H1 (cell line): ENCODE measurements at regions of chr11 and their contacts with region 1.

Region 1: DNA sequence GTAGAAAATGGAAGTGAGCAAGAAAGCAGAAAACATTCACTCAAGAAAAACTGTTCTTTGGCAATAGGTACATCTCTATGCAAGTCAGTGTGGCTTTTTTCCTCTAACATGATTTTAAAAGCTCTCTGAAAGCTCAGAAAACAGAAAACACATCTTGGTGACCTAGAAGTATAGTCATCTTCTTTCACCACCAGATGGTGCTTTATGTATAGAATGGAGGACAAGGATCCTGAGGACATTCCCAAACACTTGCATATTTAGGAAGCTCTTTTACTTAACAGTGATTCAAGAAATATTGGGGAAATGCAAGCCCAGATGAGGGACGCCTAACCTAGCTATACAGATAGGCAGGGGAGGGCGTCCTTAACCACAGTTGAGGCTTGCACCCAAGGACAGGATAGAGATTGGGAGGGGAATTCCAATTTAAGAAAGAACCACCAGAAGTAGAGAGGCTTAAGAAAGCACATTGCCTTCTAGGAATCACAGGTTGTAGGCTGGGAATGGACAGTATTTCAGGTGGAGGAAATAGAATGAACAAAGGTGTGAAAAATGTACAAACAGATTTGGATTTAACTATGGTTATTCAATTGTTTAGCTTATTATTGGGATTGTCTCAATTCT is 13.8 kb upstream of the CCDC81 start:
- DNase-seq: no peak
- H3K4me3 ChIP-seq: no peak overlapping the region
- H3K27ac ChIP-seq: no peak overlapping the region
- H3K4me1 ChIP-seq: peaks cover 0 to 3% (median 1%) of the 10 kb centered on the region in 4 experiments; a peak in 3 of 7 replicates
- H3K27me3 ChIP-seq: no peaks in the 10 kb centered on the region
- CTCF ChIP-seq: peak in 2 of 3 experiments; percentile 26 to 44; a peak in 2 of 4 replicates
- EP300 ChIP-seq: no peak
- POLR2A ChIP-seq: no peak
- RAD21 ChIP-seq: peak; percentile 60 to 65

Region 2: GRCh38 chr11:86255896-86256295 is 105.0 kb before region 1 on chr11:
- CTCF ChIA-PET with region 1: no interaction called
- POLR2A ChIA-PET with region 1: no interaction called
- DNase-seq: no peak
- H3K4me3 ChIP-seq: no peak overlapping the region
- H3K27ac ChIP-seq: no peak overlapping the region
- H3K4me1 ChIP-seq: no peaks in the 10 kb centered on the region
- H3K27me3 ChIP-seq: no peaks in the 10 kb centered on the region
- CTCF ChIP-seq: no peak
- EP300 ChIP-seq: no peak
- POLR2A ChIP-seq: no peak
- RAD21 ChIP-seq: no peak

Region 3: GRCh38 chr11:86314646-86315045 is 46.2 kb before region 1 on chr11:
- CTCF ChIA-PET with region 1: no interaction called
- POLR2A ChIA-PET with region 1: no interaction called
- DNase-seq: no peak
- H3K4me3 ChIP-seq: no peak overlapping the region
- H3K27ac ChIP-seq: no peak overlapping the region
- H3K4me1 ChIP-seq: no peaks in the 10 kb centered on the region
- H3K27me3 ChIP-seq: no peaks in the 10 kb centered on the region
- CTCF ChIP-seq: no peak
- EP300 ChIP-seq: no peak
- POLR2A ChIP-seq: no peak
- RAD21 ChIP-seq: no peak

Region 4: GRCh38 chr11:86374586-86374985 is 13.7 kb after region 1 on chr11 and contains the start of gene CCDC81:
- CTCF ChIA-PET with region 1: interaction called, 19 read pairs
- POLR2A ChIA-PET with region 1: no interaction called
- DNase-seq: peak; percentile 49 to 82
- H3K4me3 ChIP-seq: peak within 1 kb of the TSS; percentile 31 to 55 (median 38); a peak in 6 of 8 replicates
- H3K27ac ChIP-seq: no peak within 1 kb of the TSS
- H3K4me1 ChIP-seq: peaks cover 0 to 2% (median 0%) of the 10 kb centered on the region in 4 experiments; a peak in 1 of 7 replicates
- H3K27me3 ChIP-seq: peaks cover 0 to 3% (median 0%) of the 10 kb centered on the region in 4 experiments; a peak in 2 of 7 replicates
- CTCF ChIP-seq: no peak
- EP300 ChIP-seq: no peak
- POLR2A ChIP-seq: no peak
- RAD21 ChIP-seq: no peak
- total RNA-seq, gene CCDC81: 0.58 and 1.4 TPM in 2 replicates

Region 5: GRCh38 chr11:86395061-86395551 is 34.2 kb after region 1 on chr11:
- CTCF ChIA-PET with region 1: interaction called, 10 read pairs
- POLR2A ChIA-PET with region 1: interaction called, 3 read pairs
- DNase-seq: no peak
- H3K4me3 ChIP-seq: no peak overlapping the region
- H3K27ac ChIP-seq: no peak overlapping the region
- H3K4me1 ChIP-seq: peaks cover 0 to 2% (median 0%) of the 10 kb centered on the region in 4 experiments; a peak in 2 of 7 replicates
- H3K27me3 ChIP-seq: no peaks in the 10 kb centered on the region
- CTCF ChIP-seq: no peak
- EP300 ChIP-seq: no peak
- POLR2A ChIP-seq: no peak
- RAD21 ChIP-seq: no peak

Region 6: GRCh38 chr11:86408845-86409244 is 48.0 kb after region 1 on chr11:
- CTCF ChIA-PET with region 1: interaction called, 12 read pairs
- POLR2A ChIA-PET with region 1: no interaction called
- DNase-seq: no peak
- H3K4me3 ChIP-seq: no peak overlapping the region
- H3K27ac ChIP-seq: no peak overlapping the region
- H3K4me1 ChIP-seq: no peaks in the 10 kb centered on the region
- H3K27me3 ChIP-seq: no peaks in the 10 kb centered on the region
- CTCF ChIP-seq: peak in 1 of 3 experiments; percentile 21; a peak in 1 of 4 replicates
- EP300 ChIP-seq: no peak
- POLR2A ChIP-seq: no peak
- RAD21 ChIP-seq: peak in 1 of 2 experiments; percentile 16; a peak in 1 of 4 replicates

Region 7: DNA sequence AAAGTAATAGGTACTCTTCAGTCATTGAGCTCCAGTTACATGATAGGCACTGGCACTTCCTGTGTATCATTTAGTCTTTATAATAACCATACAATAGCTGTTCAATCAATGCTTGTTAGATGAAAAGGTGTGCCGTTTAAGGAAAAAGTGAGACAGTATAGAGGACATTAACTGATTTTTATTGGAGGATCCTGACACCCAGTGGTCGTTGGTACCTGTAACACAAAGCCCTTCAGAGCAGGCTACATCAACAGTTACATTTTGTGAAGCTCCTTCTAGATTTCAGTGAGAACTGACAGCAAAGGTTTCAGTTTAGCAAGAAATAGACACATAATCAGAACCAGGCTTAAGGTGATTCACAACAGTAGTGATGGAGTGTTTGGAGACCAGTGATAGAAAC is 58.0 kb after region 1 on chr11:
- CTCF ChIA-PET with region 1: interaction called, 18 read pairs
- POLR2A ChIA-PET with region 1: no interaction called
- DNase-seq: no peak
- H3K4me3 ChIP-seq: no peak overlapping the region
- H3K27ac ChIP-seq: no peak overlapping the region
- H3K4me1 ChIP-seq: no peaks in the 10 kb centered on the region
- H3K27me3 ChIP-seq: no peaks in the 10 kb centered on the region
- CTCF ChIP-seq: peak in 2 of 3 experiments; percentile 43 to 44; a peak in 3 of 4 replicates
- EP300 ChIP-seq: no peak
- POLR2A ChIP-seq: no peak
- RAD21 ChIP-seq: peak; percentile 63 to 67